ENCODE measurements at regions of chr2 and their contacts with region 1.

Region 1: GRCh38 chr2:221517696-221518151 is 54.4 kb downstream of the EPHA4 start:
- DNase-seq: peak; percentile 37 to 65
- ATAC-seq: peak; percentile 83 to 92 (median 86)
- H3K4me3 ChIP-seq: no peak overlapping the region
- H3K27ac ChIP-seq: peak overlapping the region; percentile 67
- H3K4me1 ChIP-seq: peaks cover 16% of the 10 kb centered on the region
- H3K27me3 ChIP-seq: no peaks in the 10 kb centered on the region
- CTCF ChIP-seq: no peak

Region 2: DNA sequence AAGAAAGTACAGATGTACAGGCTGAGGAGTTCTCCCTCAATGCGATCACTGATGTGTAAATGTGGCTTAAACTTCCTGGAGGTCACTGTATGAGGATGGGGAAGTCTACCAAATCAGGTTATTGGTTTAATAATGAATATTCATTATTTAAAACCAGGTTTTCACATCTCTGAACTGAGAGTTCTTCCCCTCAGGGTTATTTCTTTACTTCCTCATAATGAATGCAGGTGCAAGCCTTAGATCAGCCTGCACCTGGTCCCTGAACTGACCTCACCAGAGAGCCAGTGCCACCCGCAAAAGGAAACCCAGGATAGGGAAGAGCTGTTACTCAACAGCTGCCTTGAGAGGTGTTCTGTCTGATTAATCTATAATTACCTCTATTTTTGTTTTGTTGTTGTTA is 314.6 kb before region 1 on chr2:
- intact Hi-C with region 1: no loop called
- DNase-seq: no peak
- ATAC-seq: no peak
- H3K4me3 ChIP-seq: no peak overlapping the region
- H3K27ac ChIP-seq: no peak overlapping the region
- H3K4me1 ChIP-seq: no peaks in the 10 kb centered on the region
- H3K27me3 ChIP-seq: no peaks in the 10 kb centered on the region
- CTCF ChIP-seq: no peak

Region 3: GRCh38 chr2:221807706-221808105 is 290.0 kb after region 1 on chr2:
- intact Hi-C with region 1: loop called in 1 of 2 experiments (anchors 5 kb)
- DNase-seq: no peak
- ATAC-seq: no peak
- H3K4me3 ChIP-seq: no peak overlapping the region
- H3K27ac ChIP-seq: no peak overlapping the region
- H3K4me1 ChIP-seq: no peaks in the 10 kb centered on the region
- H3K27me3 ChIP-seq: no peaks in the 10 kb centered on the region
- CTCF ChIP-seq: no peak

Measured in psoas muscle (tissue), 8 donors.